ENCODE measurements at regions of chr5 and their contacts with region 1.

Region 1: DNA sequence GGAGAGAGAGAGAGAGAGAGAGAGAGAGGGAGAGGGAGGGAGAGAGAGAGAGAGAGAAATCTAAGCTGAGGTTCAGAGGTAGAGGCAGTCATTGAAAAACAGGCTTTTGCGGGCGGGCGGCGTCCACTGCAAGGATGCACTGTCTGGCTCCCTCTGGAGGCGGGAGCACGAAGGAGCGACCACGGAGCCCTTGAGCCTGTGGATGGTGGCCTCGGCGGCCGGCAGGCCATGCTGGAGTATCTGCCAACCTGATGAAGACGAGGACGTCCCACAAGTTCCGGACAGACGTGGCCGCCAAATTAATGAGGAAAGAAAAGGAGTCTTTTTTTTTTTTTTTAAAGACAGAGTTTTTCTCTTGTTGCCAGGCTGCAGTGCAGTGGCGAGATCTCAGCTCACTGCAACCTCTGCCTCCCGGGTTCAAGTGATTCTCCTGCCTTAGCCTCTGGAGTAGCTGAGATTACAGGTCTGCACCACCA is 2.2 kb upstream of the CCDC125 start:
- DNase-seq: peak; percentile 60 to 75 (median 68)
- ATAC-seq: peak; percentile 84
- H3K4me3 ChIP-seq: no peak overlapping the region
- H3K4me3 Mint-ChIP-seq: peak overlapping the region; percentile 21 to 86 (median 62)
- H3K27ac ChIP-seq: no peak overlapping the region
- H3K27ac Mint-ChIP-seq: peak overlapping the region; percentile 54 to 93 (median 78)
- H3K4me1 ChIP-seq: peaks cover 5 to 11% of the 10 kb centered on the region in 2 donors
- H3K4me1 Mint-ChIP-seq: peaks cover 16 to 30% (median 22%) of the 10 kb centered on the region in 7 donors
- H3K27me3 ChIP-seq: no peaks in the 10 kb centered on the region
- H3K27me3 Mint-ChIP-seq: no peaks in the 10 kb centered on the region

Region 2: DNA sequence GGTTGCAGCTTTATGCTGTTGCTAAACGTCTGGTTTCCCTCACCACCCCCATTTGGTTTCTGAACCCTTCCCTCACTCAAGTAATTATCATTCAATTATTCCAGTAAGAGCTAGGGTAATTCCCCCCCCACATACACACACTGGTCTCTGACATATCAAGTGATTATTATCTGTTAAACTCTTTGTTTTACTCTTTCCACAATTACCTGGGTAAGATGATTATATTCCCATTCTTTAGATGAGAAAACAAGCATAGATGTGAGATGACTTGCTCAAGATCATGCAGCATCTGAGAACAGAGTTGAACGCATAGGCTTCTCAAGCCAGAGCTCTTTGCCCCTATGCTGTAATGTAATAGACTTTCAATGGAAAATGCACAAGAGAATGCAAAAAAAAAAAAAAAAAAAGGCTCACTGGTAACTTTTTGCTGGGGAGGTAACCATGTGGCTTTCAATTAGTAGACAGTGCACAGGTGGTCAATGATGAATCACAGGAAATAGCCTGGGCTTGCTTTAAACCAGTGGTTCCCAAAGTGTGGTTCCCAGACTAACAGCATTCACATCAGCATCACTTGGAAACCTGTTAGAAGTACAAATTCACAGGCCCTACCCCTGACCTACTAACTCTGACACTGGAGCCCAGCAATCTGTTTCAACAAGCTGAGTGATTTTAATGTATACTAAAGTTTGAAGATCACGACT is 1031.6 kb before region 1 on chr5:
- CTCF ChIA-PET with region 1: no interaction called
- POLR2A ChIA-PET with region 1: no interaction called
- intact Hi-C with region 1: no loop called
- DNase-seq: no peak
- ATAC-seq: peak; percentile 18
- H3K4me3 ChIP-seq: no peak overlapping the region
- H3K4me3 Mint-ChIP-seq: no peak overlapping the region
- H3K27ac ChIP-seq: no peak overlapping the region
- H3K27ac Mint-ChIP-seq: peak overlapping the region in 4 of 9 donors; percentile 7 to 59 (median 40)
- H3K4me1 ChIP-seq: peaks cover 0 to 13% of the 10 kb centered on the region in 2 donors
- H3K4me1 Mint-ChIP-seq: peaks cover 0 to 23% (median 4%) of the 10 kb centered on the region in 7 donors
- H3K27me3 ChIP-seq: no peaks in the 10 kb centered on the region
- H3K27me3 Mint-ChIP-seq: peaks cover 0 to 8% (median 0%) of the 10 kb centered on the region in 5 donors

Region 3: DNA sequence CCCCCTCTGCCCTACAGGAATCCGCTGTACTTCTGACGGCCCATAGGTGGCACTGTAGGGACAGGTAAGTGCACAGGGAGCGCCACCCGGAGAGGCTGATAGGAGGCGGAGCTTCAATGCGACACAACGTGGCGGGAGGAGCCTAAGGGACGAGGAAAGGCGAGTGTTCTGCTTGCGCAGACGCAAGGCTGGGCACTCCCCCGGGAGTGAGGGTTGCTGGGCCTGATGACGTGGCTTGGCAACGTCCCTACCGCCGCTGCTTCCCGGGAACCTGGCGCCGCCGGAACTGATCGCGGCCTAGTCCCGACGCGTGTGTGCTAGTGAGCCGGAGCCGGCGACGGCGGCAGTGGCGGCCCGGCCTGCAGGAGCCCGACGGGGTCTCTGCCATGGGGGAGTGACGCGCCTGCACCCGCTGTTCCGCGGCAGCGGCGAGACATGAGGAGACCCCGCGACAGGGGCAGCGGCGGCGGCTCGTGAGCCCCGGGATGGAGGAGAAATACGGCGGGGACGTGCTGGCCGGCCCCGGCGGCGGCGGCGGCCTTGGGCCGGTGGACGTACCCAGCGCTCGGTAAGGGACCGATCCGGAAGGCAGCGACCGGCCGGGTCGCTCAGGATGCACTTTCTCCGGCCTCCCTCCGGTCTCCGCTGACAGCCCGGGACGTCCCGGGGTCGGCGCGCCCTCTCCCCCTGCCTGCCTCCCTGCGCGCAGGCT is 240.9 kb before region 1 on chr5 and contains the start of gene SLC30A5:
- CTCF ChIA-PET with region 1: interaction called, 25 read pairs
- POLR2A ChIA-PET with region 1: interaction called, 6 read pairs
- intact Hi-C with region 1: loop called (anchors 1 kb)
- DNase-seq: peak; percentile 83 to 99 (median 98)
- ATAC-seq: peak; percentile 99
- H3K4me3 ChIP-seq: peak within 1 kb of the TSS; percentile 70
- H3K4me3 Mint-ChIP-seq: peak within 1 kb of the TSS; percentile 89 to 94 (median 93)
- H3K27ac ChIP-seq: peak within 1 kb of the TSS; percentile 98
- H3K27ac Mint-ChIP-seq: peak within 1 kb of the TSS; percentile 84 to 98 (median 95)
- H3K4me1 ChIP-seq: peaks cover 9 to 17% of the 10 kb centered on the region in 2 donors
- H3K4me1 Mint-ChIP-seq: peaks cover 17 to 49% (median 37%) of the 10 kb centered on the region in 7 donors
- H3K27me3 ChIP-seq: no peaks in the 10 kb centered on the region
- H3K27me3 Mint-ChIP-seq: no peaks in the 10 kb centered on the region
- total RNA-seq, gene SLC30A5: 15.9 to 46.5 (median 41.3) TPM

Region 4: GRCh38 chr5:69189162-69190086 is 145.4 kb before region 1 on chr5 and contains the start of gene CENPH:
- CTCF ChIA-PET with region 1: no interaction called
- POLR2A ChIA-PET with region 1: no interaction called
- intact Hi-C with region 1: loop called (anchors 1 to 2 kb)
- DNase-seq: peak; percentile 83 to 92 (median 90)
- ATAC-seq: peak; percentile 99
- H3K4me3 ChIP-seq: peak within 1 kb of the TSS; percentile 99
- H3K4me3 Mint-ChIP-seq: peak within 1 kb of the TSS; percentile 86 to 96 (median 92)
- H3K27ac ChIP-seq: peak within 1 kb of the TSS; percentile 75
- H3K27ac Mint-ChIP-seq: peak within 1 kb of the TSS; percentile 85 to 96 (median 92)
- H3K4me1 ChIP-seq: peaks cover 9 to 11% of the 10 kb centered on the region in 2 donors
- H3K4me1 Mint-ChIP-seq: peaks cover 0 to 19% (median 16%) of the 10 kb centered on the region in 7 donors
- H3K27me3 ChIP-seq: no peaks in the 10 kb centered on the region
- H3K27me3 Mint-ChIP-seq: no peaks in the 10 kb centered on the region
- total RNA-seq, gene CENPH: 3.4 to 25.3 (median 8.2) TPM

Region 5: GRCh38 chr5:69234457-69235268 is 100.2 kb before region 1 on chr5 and contains the start of gene CDK7:
- CTCF ChIA-PET with region 1: interaction called, 4 read pairs
- POLR2A ChIA-PET with region 1: interaction called, 5 read pairs
- intact Hi-C with region 1: loop called (anchors 1 to 5 kb)
- DNase-seq: peak; percentile 76 to 93 (median 89)
- ATAC-seq: peak; percentile 100
- H3K4me3 ChIP-seq: peak within 1 kb of the TSS; percentile 87
- H3K4me3 Mint-ChIP-seq: peak within 1 kb of the TSS; percentile 82 to 99 (median 98)
- H3K27ac ChIP-seq: peak within 1 kb of the TSS; percentile 88
- H3K27ac Mint-ChIP-seq: peak within 1 kb of the TSS; percentile 77 to 96 (median 89)
- H3K4me1 ChIP-seq: peaks cover 10 to 16% of the 10 kb centered on the region in 2 donors
- H3K4me1 Mint-ChIP-seq: peaks cover 29 to 50% (median 39%) of the 10 kb centered on the region in 7 donors
- H3K27me3 ChIP-seq: no peaks in the 10 kb centered on the region
- H3K27me3 Mint-ChIP-seq: no peaks in the 10 kb centered on the region
- total RNA-seq, gene CDK7: 18.2 to 28.9 (median 21.8) TPM

Region 6: GRCh38 chr5:69317391-69317790 is 17.4 kb before region 1 on chr5:
- CTCF ChIA-PET with region 1: no interaction called
- POLR2A ChIA-PET with region 1: no interaction called
- intact Hi-C with region 1: loop called in 1 of 2 experiments (anchors 2 kb)
- DNase-seq: no peak
- ATAC-seq: no peak
- H3K4me3 ChIP-seq: no peak overlapping the region
- H3K4me3 Mint-ChIP-seq: no peak overlapping the region
- H3K27ac ChIP-seq: no peak overlapping the region
- H3K27ac Mint-ChIP-seq: peak overlapping the region in 1 of 9 donors; percentile 36
- H3K4me1 ChIP-seq: no peaks in the 10 kb centered on the region
- H3K4me1 Mint-ChIP-seq: peaks cover 0 to 10% (median 0%) of the 10 kb centered on the region in 7 donors
- H3K27me3 ChIP-seq: no peaks in the 10 kb centered on the region
- H3K27me3 Mint-ChIP-seq: no peaks in the 10 kb centered on the region

Measured in naive thymus-derived CD4-positive, alpha-beta T cell (primary cell).